Activated CD4-positive, alpha-beta T cell treated with anti-CD3 and anti-CD28 coated beads, Interleukin-2, amount 10 ng/mL, durations not matched to agents 24 days and 14 days (primary cell): ENCODE measurements at regions of chr9 and their contacts with region 1.

Region 1: DNA sequence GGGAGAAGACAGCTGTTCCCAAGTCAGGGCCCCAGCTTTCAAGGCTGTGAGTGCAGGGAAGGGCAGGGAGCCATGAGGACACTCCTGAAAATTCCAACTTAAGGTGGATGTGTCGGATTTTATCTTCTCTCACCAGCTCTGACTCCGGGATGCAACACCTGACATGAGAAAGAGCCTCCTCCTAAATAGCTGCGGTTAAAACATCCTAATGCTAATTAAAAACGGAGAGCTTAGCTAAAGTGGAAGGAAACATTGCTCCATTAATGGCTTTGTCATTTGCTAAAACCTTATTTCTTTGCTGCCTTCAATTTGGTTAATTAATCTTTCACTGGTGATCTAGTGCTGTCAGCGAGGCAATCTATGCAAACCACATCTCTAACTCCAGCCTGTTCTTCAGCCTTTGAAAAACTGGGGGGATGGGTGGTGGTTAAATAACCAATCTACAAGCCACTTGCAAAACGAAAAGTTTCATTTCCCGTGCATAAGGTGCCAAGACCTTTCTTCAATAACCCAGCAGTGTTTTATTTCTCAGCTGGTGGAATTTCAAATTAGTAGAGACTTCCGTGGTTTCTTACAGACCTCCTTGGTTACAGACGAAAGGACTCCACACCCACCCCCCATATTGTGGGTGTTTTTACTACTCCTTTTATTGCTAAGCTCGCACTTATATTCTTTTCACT is 379.6 kb downstream of the MLLT3 start:
- DNase-seq: peak; percentile 88
- H3K4me3 Mint-ChIP-seq: peak overlapping the region; percentile 77
- H3K27ac Mint-ChIP-seq: peak overlapping the region; percentile 61
- H3K4me1 Mint-ChIP-seq: peaks cover 58% of the 10 kb centered on the region
- H3K27me3 Mint-ChIP-seq: no peaks in the 10 kb centered on the region

Region 2: GRCh38 chr9:20043035-20043434 is 199.6 kb before region 1 on chr9:
- intact Hi-C with region 1: loop called (anchors 2 kb)
- DNase-seq: peak; percentile 68
- H3K4me3 Mint-ChIP-seq: peak overlapping the region; percentile 61
- H3K27ac Mint-ChIP-seq: peak overlapping the region; percentile 65
- H3K4me1 Mint-ChIP-seq: peaks cover 35% of the 10 kb centered on the region
- H3K27me3 Mint-ChIP-seq: no peaks in the 10 kb centered on the region

Region 3: DNA sequence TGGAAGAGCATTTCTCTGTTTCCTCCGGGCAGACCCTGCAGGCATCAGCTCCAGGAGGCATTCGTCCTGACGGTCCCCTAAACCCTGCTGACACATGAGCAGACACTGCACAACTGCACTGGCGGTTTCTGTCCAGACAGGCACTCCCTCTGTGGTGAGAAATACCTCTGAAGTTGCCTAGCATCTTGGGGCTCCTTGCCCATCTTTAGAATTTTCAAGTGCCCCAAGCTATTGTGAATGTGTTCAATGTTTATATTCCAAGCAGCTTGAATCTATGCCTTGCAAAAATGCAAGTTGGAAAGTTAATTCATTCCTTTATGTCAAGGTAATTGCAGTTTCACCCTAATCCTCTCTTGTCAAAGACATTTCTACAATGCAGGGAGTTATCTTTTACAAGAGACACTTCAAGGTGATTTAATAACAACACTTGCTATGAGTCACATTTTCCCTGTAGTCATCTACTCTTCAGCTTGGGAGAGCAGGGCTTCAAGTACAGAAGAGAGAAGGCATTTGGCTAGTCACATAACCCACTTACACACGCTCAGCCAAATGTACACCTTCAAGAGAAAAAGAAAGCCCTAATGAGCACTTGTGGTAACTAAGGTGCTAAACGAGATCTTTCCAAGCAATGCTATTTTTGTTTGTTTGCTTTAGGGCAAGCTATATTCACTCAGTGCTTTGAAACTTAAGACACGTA is 77.1 kb after region 1 on chr9:
- intact Hi-C with region 1: loop called (anchors 2 kb)
- DNase-seq: peak; percentile 80
- H3K4me3 Mint-ChIP-seq: peak overlapping the region; percentile 60
- H3K27ac Mint-ChIP-seq: peak overlapping the region; percentile 94
- H3K4me1 Mint-ChIP-seq: peaks cover 78% of the 10 kb centered on the region
- H3K27me3 Mint-ChIP-seq: no peaks in the 10 kb centered on the region

Region 4: GRCh38 chr9:20343325-20343724 is 100.7 kb after region 1 on chr9:
- intact Hi-C with region 1: no loop called
- DNase-seq: no peak
- H3K4me3 Mint-ChIP-seq: no peak overlapping the region
- H3K27ac Mint-ChIP-seq: no peak overlapping the region
- H3K4me1 Mint-ChIP-seq: peaks cover 6% of the 10 kb centered on the region
- H3K27me3 Mint-ChIP-seq: no peaks in the 10 kb centered on the region